Activated CD4-positive, alpha-beta memory T cell treated with anti-CD3 and anti-CD28 coated beads for 36 hours (primary cell): ENCODE measurements at regions of chr1 and their contacts with region 1.

Region 1: GRCh38 chr1:2921970-2922686 is 99.1 kb upstream of the ACTRT2 start:
- DNase-seq: peak; percentile 41
- H3K4me3 Mint-ChIP-seq: no peak overlapping the region
- H3K27ac Mint-ChIP-seq: no peak overlapping the region
- H3K4me1 Mint-ChIP-seq: peaks cover 2% of the 10 kb centered on the region
- H3K27me3 Mint-ChIP-seq: no peaks in the 10 kb centered on the region

Region 2: DNA sequence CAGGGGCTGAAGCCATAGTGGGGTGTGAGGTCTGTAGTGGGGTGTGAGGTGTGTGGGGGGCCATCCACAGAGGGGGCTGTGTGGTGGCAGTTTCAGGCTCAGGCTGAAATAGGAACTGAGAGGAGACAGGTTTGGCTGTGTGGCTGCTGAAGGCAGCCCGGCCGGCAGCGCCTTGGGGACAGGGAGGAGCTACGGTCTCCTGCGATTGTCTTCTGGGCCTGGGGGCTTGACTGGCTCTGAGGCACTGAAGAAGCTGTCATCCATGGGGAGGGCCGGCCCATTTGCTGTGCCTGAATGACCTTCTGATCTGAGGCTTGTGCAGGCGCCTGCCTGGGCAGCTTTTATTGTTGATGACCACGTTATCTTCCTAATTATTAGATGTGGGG is 110.6 kb before region 1 on chr1:
- CTCF ChIA-PET with region 1: no interaction called
- POLR2A ChIA-PET with region 1: no interaction called
- intact Hi-C with region 1: no loop called
- DNase-seq: no peak
- H3K4me3 Mint-ChIP-seq: no peak overlapping the region
- H3K27ac Mint-ChIP-seq: no peak overlapping the region
- H3K4me1 Mint-ChIP-seq: no peaks in the 10 kb centered on the region
- H3K27me3 Mint-ChIP-seq: peaks cover 2% of the 10 kb centered on the region

Region 3: GRCh38 chr1:2821966-2822620 is 100.0 kb before region 1 on chr1:
- CTCF ChIA-PET with region 1: interaction called, 21 read pairs
- POLR2A ChIA-PET with region 1: no interaction called
- intact Hi-C with region 1: loop called (anchors 10 kb)
- DNase-seq: peak; percentile 49
- H3K4me3 Mint-ChIP-seq: no peak overlapping the region
- H3K27ac Mint-ChIP-seq: no peak overlapping the region
- H3K4me1 Mint-ChIP-seq: no peaks in the 10 kb centered on the region
- H3K27me3 Mint-ChIP-seq: peaks cover 7% of the 10 kb centered on the region

Region 4: DNA sequence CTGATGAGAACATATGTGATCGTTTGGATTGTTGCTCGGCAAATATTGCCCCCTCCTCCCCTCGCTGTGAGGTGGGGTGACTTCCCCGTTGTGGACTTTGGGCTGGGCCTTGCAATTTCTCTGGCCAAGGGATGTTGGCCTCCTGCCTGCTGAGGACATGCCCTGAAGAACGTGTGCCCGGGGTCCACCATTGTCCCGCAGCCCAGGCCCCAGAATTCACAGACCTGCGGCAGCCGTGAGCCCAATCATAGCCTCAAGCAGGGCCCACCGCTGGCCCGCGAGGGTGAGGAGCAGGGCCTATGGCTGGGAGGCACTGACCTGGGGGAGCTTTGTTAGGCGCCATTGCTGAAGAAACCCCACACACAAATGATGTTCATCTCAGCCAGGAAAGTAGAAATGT is 40.8 kb after region 1 on chr1:
- CTCF ChIA-PET with region 1: no interaction called
- POLR2A ChIA-PET with region 1: no interaction called
- intact Hi-C with region 1: no loop called
- DNase-seq: no peak
- H3K4me3 Mint-ChIP-seq: no peak overlapping the region
- H3K27ac Mint-ChIP-seq: no peak overlapping the region
- H3K4me1 Mint-ChIP-seq: no peaks in the 10 kb centered on the region
- H3K27me3 Mint-ChIP-seq: peaks cover 4% of the 10 kb centered on the region